PC-9 (cell line): ENCODE measurements at regions of chr10 and their contacts with region 1.

Region 1: GRCh38 chr10:48215488-48216204 is 58.9 kb downstream of the FRMPD2 start:
- DNase-seq: peak; percentile 54 to 76
- H3K4me3 ChIP-seq: no peak overlapping the region
- H3K27ac ChIP-seq: no peak overlapping the region
- H3K4me1 ChIP-seq: no peaks in the 10 kb centered on the region
- H3K27me3 ChIP-seq: peaks cover 37% of the 10 kb centered on the region; the same call in 1 of the 2 replicates
- CTCF ChIP-seq: peak; percentile 94

Region 2: GRCh38 chr10:48506147-48506917 is 290.7 kb after region 1 on chr10:
- CTCF ChIA-PET with region 1: no interaction called
- POLR2A ChIA-PET with region 1: no interaction called
- intact Hi-C with region 1: loop called (anchors 10 kb)
- DNase-seq: peak in 1 of 2 experiments; percentile 26
- H3K4me3 ChIP-seq: no peak overlapping the region
- H3K27ac ChIP-seq: no peak overlapping the region
- H3K4me1 ChIP-seq: peaks cover 4% of the 10 kb centered on the region; the same call in 1 of the 2 replicates
- H3K27me3 ChIP-seq: no peaks in the 10 kb centered on the region
- CTCF ChIP-seq: peak; percentile 56